Heart right ventricle (tissue), 16 donors: ENCODE measurements at regions of chr4 and their contacts with region 1.

Region 1: GRCh38 chr4:113952452-113953029 is 26.9 kb downstream of the ARSJ start:
- DNase-seq: peak in 1 of 2 donors; percentile 16
- ATAC-seq: peak; percentile 34 to 77 (median 67)
- H3K4me3 ChIP-seq: no peak overlapping the region
- H3K27ac ChIP-seq: no peak overlapping the region
- H3K4me1 ChIP-seq: peaks cover 0 to 21% (median 6%) of the 10 kb centered on the region in 9 donors
- H3K27me3 ChIP-seq: peaks cover 0 to 16% (median 0%) of the 10 kb centered on the region in 7 donors
- CTCF ChIP-seq: peak; percentile 37 to 72 (median 66)

Region 2: GRCh38 chr4:113495790-113496189 is 456.8 kb before region 1 on chr4:
- intact Hi-C with region 1: no loop called
- DNase-seq: no peak
- ATAC-seq: peak in 1 of 8 donors; percentile 47
- H3K4me3 ChIP-seq: no peak overlapping the region
- H3K27ac ChIP-seq: no peak overlapping the region
- H3K4me1 ChIP-seq: peaks cover 0 to 29% (median 10%) of the 10 kb centered on the region in 9 donors
- H3K27me3 ChIP-seq: no peaks in the 10 kb centered on the region
- CTCF ChIP-seq: no peak

Region 3: DNA sequence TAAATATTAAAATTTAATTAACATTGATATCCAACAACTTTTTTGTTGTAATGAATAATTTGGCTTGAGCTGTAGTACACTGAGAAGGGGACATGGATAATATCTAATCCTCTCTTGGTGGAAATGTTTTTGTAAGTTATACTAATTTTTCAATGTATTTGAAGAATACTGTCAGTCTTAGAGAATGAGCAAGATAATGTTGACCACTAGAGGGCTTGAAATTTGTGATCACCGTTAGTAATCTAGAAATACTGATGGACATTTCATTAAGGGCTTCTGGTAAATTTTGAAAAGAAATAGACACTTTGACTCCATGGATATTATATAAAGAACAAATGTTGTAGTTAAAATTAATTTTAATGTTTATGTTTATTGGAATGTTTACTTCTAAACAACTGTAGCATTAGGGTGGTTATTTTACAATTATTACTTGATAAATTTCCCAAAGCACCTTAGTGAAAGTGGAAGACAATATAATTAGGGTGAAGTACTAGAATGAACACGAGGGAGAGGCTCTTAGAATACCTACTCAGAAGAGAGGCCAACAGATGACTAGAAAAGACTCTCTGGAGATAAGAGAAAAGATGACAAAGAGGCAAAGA is 171.0 kb before region 1 on chr4:
- intact Hi-C with region 1: no loop called
- DNase-seq: no peak
- ATAC-seq: peak in 1 of 8 donors; percentile 41
- H3K4me3 ChIP-seq: no peak overlapping the region
- H3K27ac ChIP-seq: no peak overlapping the region
- H3K4me1 ChIP-seq: peaks cover 0 to 32% (median 0%) of the 10 kb centered on the region in 9 donors
- H3K27me3 ChIP-seq: no peaks in the 10 kb centered on the region
- CTCF ChIP-seq: peak; percentile 33 to 81 (median 73)

Region 4: GRCh38 chr4:114015444-114015899 is 62.9 kb after region 1 on chr4:
- intact Hi-C with region 1: no loop called
- DNase-seq: no peak
- ATAC-seq: no peak
- H3K4me3 ChIP-seq: no peak overlapping the region
- H3K27ac ChIP-seq: no peak overlapping the region
- H3K4me1 ChIP-seq: no peaks in the 10 kb centered on the region
- H3K27me3 ChIP-seq: peaks cover 0 to 3% (median 0%) of the 10 kb centered on the region in 7 donors
- CTCF ChIP-seq: no peak

Region 5: DNA sequence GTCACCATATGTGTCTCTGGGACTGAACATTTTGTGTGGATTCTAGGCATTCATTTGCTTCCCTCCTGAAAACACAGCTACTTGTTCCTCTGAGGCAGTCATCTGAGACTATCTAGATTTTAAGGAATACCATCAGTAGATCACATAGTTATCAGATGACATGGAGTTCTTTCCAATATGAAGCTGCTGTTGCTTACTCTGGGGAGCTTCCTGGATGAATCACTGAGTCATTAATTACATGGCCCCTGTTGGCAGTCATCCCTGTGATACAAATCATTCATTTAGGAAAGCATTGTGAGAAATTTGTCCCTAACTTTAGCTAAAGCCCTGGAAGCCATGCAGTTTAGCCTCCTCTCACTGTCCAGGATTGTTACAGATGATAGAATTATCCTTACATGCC is 125.1 kb after region 1 on chr4:
- intact Hi-C with region 1: loop called in 3 of 10 experiments (anchors 5 to 10 kb)
- DNase-seq: no peak
- ATAC-seq: no peak
- H3K4me3 ChIP-seq: no peak overlapping the region
- H3K27ac ChIP-seq: no peak overlapping the region
- H3K4me1 ChIP-seq: peaks cover 0 to 4% (median 0%) of the 10 kb centered on the region in 9 donors
- H3K27me3 ChIP-seq: no peaks in the 10 kb centered on the region
- CTCF ChIP-seq: no peak

Region 6: GRCh38 chr4:114180481-114180880 is 227.9 kb after region 1 on chr4:
- intact Hi-C with region 1: loop called in 1 of 10 experiments (anchors 10 kb)
- DNase-seq: peak; percentile 6 to 17
- ATAC-seq: no peak
- H3K4me3 ChIP-seq: no peak overlapping the region
- H3K27ac ChIP-seq: no peak overlapping the region
- H3K4me1 ChIP-seq: peaks cover 0 to 8% (median 0%) of the 10 kb centered on the region in 9 donors
- H3K27me3 ChIP-seq: no peaks in the 10 kb centered on the region
- CTCF ChIP-seq: peak in 7 of 9 donors; percentile 4 to 51 (median 43)

Region 7: GRCh38 chr4:114386637-114387233 is 434.2 kb after region 1 on chr4:
- intact Hi-C with region 1: loop called in 3 of 10 experiments (anchors 5 to 10 kb)
- DNase-seq: no peak
- ATAC-seq: no peak
- H3K4me3 ChIP-seq: no peak overlapping the region
- H3K27ac ChIP-seq: no peak overlapping the region
- H3K4me1 ChIP-seq: no peaks in the 10 kb centered on the region
- H3K27me3 ChIP-seq: peaks cover 0 to 5% (median 0%) of the 10 kb centered on the region in 7 donors
- CTCF ChIP-seq: peak; percentile 32 to 74 (median 65)

Region 8: DNA sequence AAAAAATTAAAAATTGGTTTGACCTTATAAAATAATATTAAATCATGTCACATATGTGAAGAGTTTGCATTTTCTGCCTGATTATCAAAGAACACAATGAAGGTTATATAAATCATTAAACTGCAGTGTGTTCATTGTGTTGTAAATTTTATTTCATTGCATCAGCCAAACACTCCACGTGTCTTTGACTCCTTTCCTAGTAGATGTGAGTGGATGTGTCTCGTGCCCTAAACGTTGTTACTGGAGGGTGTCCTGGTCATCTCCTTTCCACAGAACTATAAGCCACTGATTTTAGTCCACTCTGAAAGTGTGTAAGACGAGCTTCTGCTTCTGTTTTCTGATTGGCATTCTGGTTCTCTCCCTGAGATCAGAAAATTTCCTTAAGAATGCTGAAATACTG is 1033.6 kb after region 1 on chr4:
- intact Hi-C with region 1: no loop called
- DNase-seq: no peak
- ATAC-seq: no peak
- H3K4me3 ChIP-seq: no peak overlapping the region
- H3K27ac ChIP-seq: no peak overlapping the region
- H3K4me1 ChIP-seq: no peaks in the 10 kb centered on the region
- H3K27me3 ChIP-seq: no peaks in the 10 kb centered on the region
- CTCF ChIP-seq: no peak